Dendritic cell treated with granulocyte-macrophage colony-stimulating factor and Interleukin-4, amounts not matched to agents 40 ng/mL and 50 ng/mL, for 4 days (primary cell): ENCODE measurements at regions of chr2 and their contacts with region 1.

Region 1: GRCh38 chr2:85813982-85814801 is 60.4 kb downstream of the ATOH8 start:
- H3K4me3 Mint-ChIP-seq: no peak overlapping the region
- H3K27ac Mint-ChIP-seq: no peak overlapping the region
- H3K4me1 Mint-ChIP-seq: no peaks in the 10 kb centered on the region
- H3K27me3 Mint-ChIP-seq: peaks cover 41% of the 10 kb centered on the region

Region 2: GRCh38 chr2:85595301-85596025 is 218.7 kb before region 1 on chr2 and contains the start of gene RNF181:
- intact Hi-C with region 1: no loop called
- H3K4me3 Mint-ChIP-seq: peak within 1 kb of the TSS; percentile 95
- H3K27ac Mint-ChIP-seq: peak within 1 kb of the TSS; percentile 97
- H3K4me1 Mint-ChIP-seq: peaks cover 83% of the 10 kb centered on the region
- H3K27me3 Mint-ChIP-seq: no peaks in the 10 kb centered on the region

Region 3: GRCh38 chr2:85635636-85636035 is 178.6 kb before region 1 on chr2:
- intact Hi-C with region 1: loop called (anchors 2 kb)
- H3K4me3 Mint-ChIP-seq: no peak overlapping the region
- H3K27ac Mint-ChIP-seq: peak overlapping the region; percentile 54
- H3K4me1 Mint-ChIP-seq: peaks cover 27% of the 10 kb centered on the region
- H3K27me3 Mint-ChIP-seq: no peaks in the 10 kb centered on the region

Region 4: DNA sequence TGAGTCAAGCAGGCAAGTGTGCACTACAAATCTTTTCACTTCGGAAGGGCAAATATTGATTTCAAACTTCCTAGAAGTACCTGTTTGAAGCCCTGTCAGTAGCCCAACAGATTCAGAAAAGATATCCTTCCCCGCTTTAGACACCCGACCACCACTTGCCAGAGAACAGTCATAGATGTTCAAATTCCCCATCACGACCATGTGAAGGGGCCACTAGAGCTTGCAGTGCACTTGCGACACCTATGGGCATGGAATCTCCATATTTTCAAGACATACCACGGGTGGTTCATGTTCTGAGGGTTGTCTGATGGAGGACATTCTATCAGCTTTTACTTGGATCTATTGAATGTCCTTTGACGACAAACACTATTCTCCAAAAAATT is 96.2 kb before region 1 on chr2:
- intact Hi-C with region 1: no loop called
- H3K4me3 Mint-ChIP-seq: no peak overlapping the region
- H3K27ac Mint-ChIP-seq: peak overlapping the region; percentile 42
- H3K4me1 Mint-ChIP-seq: peaks cover 56% of the 10 kb centered on the region
- H3K27me3 Mint-ChIP-seq: peaks cover 3% of the 10 kb centered on the region

Region 5: DNA sequence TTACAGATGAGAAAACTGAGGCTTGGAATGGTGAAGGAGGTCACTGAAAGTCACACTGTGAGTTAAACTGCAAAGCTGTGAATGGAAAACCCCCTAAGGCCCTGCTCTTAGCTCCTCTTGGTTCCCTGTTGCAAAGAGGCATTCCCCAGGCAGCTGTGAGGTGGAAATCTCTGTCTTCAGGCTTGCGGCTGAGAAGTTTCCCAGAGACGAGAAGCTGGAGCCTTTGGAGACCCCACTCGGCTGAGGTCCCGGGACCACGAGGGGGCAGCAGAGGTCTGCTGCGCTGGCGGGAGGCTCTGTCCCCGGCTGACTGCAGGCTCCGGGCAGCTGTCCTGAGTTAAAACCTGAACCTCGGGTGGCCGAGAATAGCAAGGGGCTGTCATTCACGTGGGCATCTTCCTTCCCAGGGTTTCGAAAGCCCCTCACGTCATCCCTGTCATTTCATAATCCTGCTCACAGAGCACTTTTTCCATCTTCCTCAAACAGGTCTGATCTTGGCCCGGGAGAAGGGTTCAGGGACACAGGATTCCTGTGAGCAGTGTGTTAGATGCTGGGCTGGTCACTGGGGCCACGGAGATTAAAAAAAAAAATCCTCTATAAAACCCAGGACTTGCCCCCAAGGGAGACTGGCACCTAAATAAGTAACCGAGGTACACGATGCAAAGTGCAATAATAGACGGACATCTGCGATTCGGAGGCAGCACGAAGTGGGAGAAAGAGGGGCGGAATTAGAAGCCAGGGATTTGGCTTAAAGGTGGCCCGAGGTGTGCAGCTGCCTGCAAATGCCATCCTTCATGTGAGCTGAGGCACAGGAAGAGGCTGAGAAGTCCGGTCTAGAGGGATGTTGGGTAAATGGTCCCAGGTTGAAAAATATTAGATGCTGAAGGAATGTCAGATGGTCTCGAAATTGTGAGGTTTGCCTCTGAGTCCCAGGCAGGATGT is 85.0 kb before region 1 on chr2:
- intact Hi-C with region 1: loop called (anchors 1 kb)
- H3K4me3 Mint-ChIP-seq: no peak overlapping the region
- H3K27ac Mint-ChIP-seq: no peak overlapping the region
- H3K4me1 Mint-ChIP-seq: peaks cover 53% of the 10 kb centered on the region
- H3K27me3 Mint-ChIP-seq: peaks cover 15% of the 10 kb centered on the region

Region 6: DNA sequence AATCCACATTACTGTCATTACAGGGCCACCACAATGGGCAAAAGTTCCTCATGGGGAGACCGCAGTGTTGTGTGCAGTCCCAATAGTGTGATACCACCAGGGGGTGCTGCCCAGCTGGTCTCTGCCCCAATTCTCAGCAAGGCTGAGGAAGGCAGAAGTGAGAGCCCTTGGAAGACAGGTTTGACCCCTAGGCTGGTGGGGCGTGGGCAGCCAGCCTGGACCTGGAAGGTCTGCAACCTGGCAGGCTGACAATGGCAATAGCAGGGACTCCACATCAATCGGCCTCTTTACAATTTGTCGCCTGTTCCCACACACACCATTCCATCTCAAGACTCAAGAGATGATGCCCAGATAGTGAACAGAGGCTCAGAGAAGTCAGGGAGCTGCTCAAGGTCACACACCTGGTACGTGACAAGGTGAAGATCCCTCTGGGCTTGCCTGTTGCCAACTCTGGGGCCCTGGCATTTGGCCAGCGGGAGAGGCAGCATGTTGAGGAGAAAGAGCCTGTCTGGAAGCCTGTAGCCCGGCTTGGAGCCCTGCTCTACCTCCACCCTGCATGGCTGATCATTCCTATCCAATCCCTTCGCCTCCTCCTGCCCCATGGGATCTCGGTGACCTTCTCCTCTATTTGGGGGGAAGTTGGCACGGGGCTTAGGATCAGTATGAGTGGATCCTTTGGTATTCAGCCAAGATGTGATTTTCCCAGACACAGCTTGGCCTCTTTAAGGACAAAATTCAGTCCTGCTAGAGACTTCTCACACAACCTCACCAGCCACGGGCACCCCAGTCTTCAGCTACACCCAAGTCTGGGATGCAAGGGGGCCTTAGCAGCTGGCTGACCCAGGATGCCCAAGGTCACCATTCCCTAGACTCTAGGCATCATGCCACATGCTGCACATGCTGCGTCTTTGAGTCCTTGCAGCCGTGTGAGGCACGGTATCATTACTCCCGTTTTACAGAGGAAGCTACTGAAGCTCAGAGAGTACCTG is 63.3 kb before region 1 on chr2:
- intact Hi-C with region 1: loop called (anchors 5 kb)
- H3K4me3 Mint-ChIP-seq: no peak overlapping the region
- H3K27ac Mint-ChIP-seq: no peak overlapping the region
- H3K4me1 Mint-ChIP-seq: peaks cover 79% of the 10 kb centered on the region
- H3K27me3 Mint-ChIP-seq: peaks cover 82% of the 10 kb centered on the region